Esophagus muscularis mucosa (tissue), 4 donors: ENCODE measurements at regions of chr6 and their contacts with region 1.

Region 1: DNA sequence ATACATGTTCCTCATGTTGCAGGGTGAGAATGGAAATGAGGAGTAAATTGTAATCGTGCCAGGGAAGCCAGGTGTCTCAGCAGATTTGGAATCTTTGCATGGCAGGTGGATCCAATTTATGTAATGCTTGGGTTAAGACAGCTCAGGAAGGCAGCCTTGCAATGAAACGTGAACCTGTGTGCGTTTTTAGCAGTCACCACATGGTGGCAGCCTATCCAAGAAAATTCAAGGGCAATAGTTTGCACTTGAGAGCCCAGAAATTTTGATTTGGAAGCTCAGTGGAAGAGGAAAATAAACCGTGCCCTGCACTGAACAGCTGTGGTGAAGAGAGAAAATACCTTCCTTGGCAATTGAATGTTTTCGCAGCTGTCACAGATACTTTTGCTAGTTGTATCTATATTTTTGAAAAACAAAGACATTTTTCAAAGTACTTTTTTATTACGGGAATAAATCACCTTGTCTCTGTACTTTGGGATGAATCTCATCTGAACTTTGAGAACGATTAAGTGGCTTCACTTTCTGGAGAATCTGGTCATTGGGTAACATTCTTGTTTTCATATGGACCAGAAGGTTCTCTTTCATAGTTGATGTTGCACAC is 26.5 kb downstream of the MTHFD1L start:
- DNase-seq: no peak
- H3K4me3 ChIP-seq: no peak overlapping the region
- H3K27ac ChIP-seq: no peak overlapping the region
- H3K4me1 ChIP-seq: peaks cover 8 to 19% (median 12%) of the 10 kb centered on the region in 4 donors
- H3K27me3 ChIP-seq: no peaks in the 10 kb centered on the region
- CTCF ChIP-seq: peak; percentile 79 to 85 (median 84)
- EP300 ChIP-seq: no peak
- POLR2A ChIP-seq: no peak

Region 2: DNA sequence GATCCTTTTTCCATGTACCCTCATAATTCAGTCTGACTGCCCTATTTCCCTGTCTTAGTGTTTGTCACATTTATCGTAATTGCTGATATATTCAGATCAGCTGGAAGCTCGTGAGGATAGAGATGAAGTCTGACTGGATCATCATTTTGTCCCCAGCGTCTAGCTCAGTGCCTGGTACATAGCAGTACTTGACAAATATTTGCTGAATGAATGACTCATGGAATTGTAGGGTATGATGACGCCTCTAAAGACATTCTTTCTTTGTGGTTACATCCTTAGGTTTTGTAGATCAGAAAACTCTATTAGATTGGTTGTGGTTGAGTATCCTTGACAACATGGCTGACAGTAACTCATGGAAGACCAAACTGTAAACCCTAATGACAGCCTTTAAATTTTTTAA is 42.4 kb after region 1 on chr6:
- intact Hi-C with region 1: no loop called
- DNase-seq: peak; percentile 24
- H3K4me3 ChIP-seq: no peak overlapping the region
- H3K27ac ChIP-seq: no peak overlapping the region
- H3K4me1 ChIP-seq: peaks cover 4 to 15% (median 11%) of the 10 kb centered on the region in 4 donors
- H3K27me3 ChIP-seq: no peaks in the 10 kb centered on the region
- CTCF ChIP-seq: no peak
- EP300 ChIP-seq: no peak
- POLR2A ChIP-seq: no peak

Region 3: DNA sequence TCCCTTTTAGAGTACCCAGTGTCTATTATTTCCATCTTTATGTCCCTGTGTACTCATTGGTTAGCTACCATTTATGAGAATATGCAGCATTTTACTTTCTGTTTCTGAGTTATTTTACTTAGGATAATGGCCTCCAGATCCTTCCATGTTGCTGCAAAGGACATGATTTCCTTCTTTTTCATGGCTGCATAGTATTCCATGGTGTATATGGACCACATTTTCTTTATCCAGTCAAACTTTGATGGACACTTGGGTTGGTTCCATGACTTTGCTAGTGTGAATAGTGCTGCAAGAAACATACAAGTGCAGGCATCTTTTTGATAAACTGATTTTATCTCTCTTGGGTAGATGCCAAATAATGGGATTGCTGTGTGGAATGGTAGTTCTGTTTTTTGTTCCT is 443.9 kb after region 1 on chr6:
- intact Hi-C with region 1: loop called (anchors 2 kb)
- DNase-seq: no peak
- H3K4me3 ChIP-seq: no peak overlapping the region
- H3K27ac ChIP-seq: no peak overlapping the region
- H3K4me1 ChIP-seq: peaks cover 0 to 15% (median 5%) of the 10 kb centered on the region in 4 donors
- H3K27me3 ChIP-seq: no peaks in the 10 kb centered on the region
- CTCF ChIP-seq: no peak
- EP300 ChIP-seq: no peak
- POLR2A ChIP-seq: no peak

Region 4: GRCh38 chr6:151475653-151476523 is 583.9 kb after region 1 on chr6:
- intact Hi-C with region 1: loop called (anchors 10 kb)
- DNase-seq: no peak
- H3K4me3 ChIP-seq: peak overlapping the region in 2 of 4 donors; percentile 13 to 37
- H3K27ac ChIP-seq: no peak overlapping the region
- H3K4me1 ChIP-seq: peaks cover 0 to 9% (median 7%) of the 10 kb centered on the region in 4 donors
- H3K27me3 ChIP-seq: no peaks in the 10 kb centered on the region
- CTCF ChIP-seq: peak; percentile 59 to 75 (median 69)
- EP300 ChIP-seq: no peak
- POLR2A ChIP-seq: no peak